ENCODE measurements at regions of chr12 and their contacts with region 1.

Region 1: GRCh38 chr12:12384571-12385340 is 27.9 kb downstream of the BORCS5 start:
- DNase-seq: peak in 4 of 5 donors; percentile 46 to 48 (median 47)
- H3K4me3 ChIP-seq: peak overlapping the region in 1 of 2 donors; percentile 9
- H3K4me3 Mint-ChIP-seq: peak overlapping the region; percentile 59 to 85 (median 74)
- H3K27ac ChIP-seq: peak overlapping the region; percentile 50
- H3K27ac Mint-ChIP-seq: peak overlapping the region; percentile 86 to 99 (median 96)
- H3K4me1 ChIP-seq: peaks cover 87% of the 10 kb centered on the region
- H3K4me1 Mint-ChIP-seq: peaks cover 46 to 87% (median 68%) of the 10 kb centered on the region in 4 donors
- H3K27me3 ChIP-seq: no peaks in the 10 kb centered on the region
- H3K27me3 Mint-ChIP-seq: no peaks in the 10 kb centered on the region

Region 2: GRCh38 chr12:12004524-12004923 is 380.2 kb before region 1 on chr12:
- CTCF ChIA-PET with region 1: no interaction called
- POLR2A ChIA-PET with region 1: no interaction called
- intact Hi-C with region 1: no loop called
- DNase-seq: no peak
- H3K4me3 ChIP-seq: no peak overlapping the region
- H3K4me3 Mint-ChIP-seq: no peak overlapping the region
- H3K27ac ChIP-seq: no peak overlapping the region
- H3K27ac Mint-ChIP-seq: peak overlapping the region in 6 of 7 donors; percentile 15 to 75 (median 48)
- H3K4me1 ChIP-seq: peaks cover 41% of the 10 kb centered on the region
- H3K4me1 Mint-ChIP-seq: peaks cover 50 to 81% (median 66%) of the 10 kb centered on the region in 4 donors
- H3K27me3 ChIP-seq: no peaks in the 10 kb centered on the region
- H3K27me3 Mint-ChIP-seq: no peaks in the 10 kb centered on the region

Region 3: GRCh38 chr12:12432364-12432763 is 47.6 kb after region 1 on chr12:
- CTCF ChIA-PET with region 1: interaction called, 4 read pairs
- POLR2A ChIA-PET with region 1: interaction called, 13 read pairs
- intact Hi-C with region 1: no loop called
- DNase-seq: no peak
- H3K4me3 ChIP-seq: no peak overlapping the region
- H3K4me3 Mint-ChIP-seq: peak overlapping the region in 6 of 8 donors; percentile 6 to 82 (median 45)
- H3K27ac ChIP-seq: no peak overlapping the region
- H3K27ac Mint-ChIP-seq: peak overlapping the region in 5 of 7 donors; percentile 15 to 84 (median 60)
- H3K4me1 ChIP-seq: peaks cover 59% of the 10 kb centered on the region
- H3K4me1 Mint-ChIP-seq: peaks cover 45 to 90% (median 56%) of the 10 kb centered on the region in 4 donors
- H3K27me3 ChIP-seq: no peaks in the 10 kb centered on the region
- H3K27me3 Mint-ChIP-seq: no peaks in the 10 kb centered on the region

Region 4: DNA sequence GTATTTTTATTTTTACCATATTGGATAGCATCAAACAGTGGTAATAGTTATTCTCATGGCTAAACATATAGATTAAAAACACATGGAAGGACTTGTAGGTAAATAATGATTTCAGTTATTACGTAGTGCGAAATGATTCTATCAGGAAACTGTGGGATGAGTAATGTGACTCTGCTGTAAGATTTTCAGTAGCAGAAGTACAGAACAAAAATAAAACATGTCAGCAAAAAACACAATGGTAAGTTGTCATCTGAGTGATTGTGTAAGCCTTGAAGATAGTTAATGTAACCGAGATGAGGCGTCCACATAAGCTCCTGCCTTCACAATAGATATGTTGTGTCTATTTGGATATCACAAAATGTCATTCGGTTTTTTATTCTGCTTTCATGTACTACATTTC is 71.9 kb after region 1 on chr12:
- CTCF ChIA-PET with region 1: interaction called, 4 read pairs
- POLR2A ChIA-PET with region 1: interaction called, 28 read pairs
- intact Hi-C with region 1: no loop called
- DNase-seq: peak in 4 of 5 donors; percentile 54 to 72 (median 54)
- H3K4me3 ChIP-seq: peak overlapping the region in 1 of 2 donors; percentile 27
- H3K4me3 Mint-ChIP-seq: peak overlapping the region; percentile 23 to 78 (median 66)
- H3K27ac ChIP-seq: peak overlapping the region; percentile 65
- H3K27ac Mint-ChIP-seq: peak overlapping the region; percentile 78 to 97 (median 92)
- H3K4me1 ChIP-seq: peaks cover 40% of the 10 kb centered on the region
- H3K4me1 Mint-ChIP-seq: peaks cover 21 to 60% (median 45%) of the 10 kb centered on the region in 4 donors
- H3K27me3 ChIP-seq: no peaks in the 10 kb centered on the region
- H3K27me3 Mint-ChIP-seq: no peaks in the 10 kb centered on the region

Measured in CD4-positive, alpha-beta memory T cell (primary cell).